BJ (cell line): ENCODE measurements at regions of chr9 and their contacts with region 1.

Region 1: DNA sequence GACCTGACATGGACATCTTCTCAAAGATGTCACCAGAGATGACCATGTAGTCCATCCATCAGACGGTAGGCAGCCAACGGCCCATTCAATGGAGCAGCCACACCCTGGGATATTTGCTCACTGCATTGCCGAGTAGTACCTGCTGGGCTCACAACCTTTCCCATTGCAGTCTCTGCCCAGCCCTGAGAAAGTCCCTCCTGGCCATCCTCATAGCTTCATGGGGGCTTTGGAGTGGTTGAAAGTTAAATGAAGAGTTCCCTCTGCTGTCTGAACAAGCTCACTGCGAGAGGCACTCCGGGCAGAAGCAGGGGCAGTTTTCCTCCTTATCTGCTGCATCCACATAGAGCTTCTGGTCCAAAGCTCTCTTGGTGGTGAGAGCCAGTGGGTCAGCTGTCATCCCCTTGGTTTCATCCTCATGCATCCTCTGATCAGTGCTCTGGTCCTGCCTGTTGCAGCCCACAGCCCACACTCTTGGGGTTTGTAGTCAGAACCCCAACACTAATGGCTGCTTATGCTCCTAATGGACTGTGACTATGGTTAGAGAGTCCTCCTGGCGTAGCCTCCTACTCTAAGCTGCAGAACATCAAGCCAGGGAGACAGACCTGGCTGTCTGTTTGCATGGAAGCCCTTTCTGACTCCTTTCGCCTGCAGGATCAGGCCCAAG is 23.4 kb downstream of the TNFSF8 start:
- DNase-seq: no peak
- H3K4me3 ChIP-seq: no peak overlapping the region
- H3K27me3 ChIP-seq: no peaks in the 10 kb centered on the region
- CTCF ChIP-seq: peak; percentile 75

Region 2: GRCh38 chr9:113785334-113785733 is 1121.7 kb before region 1 on chr9:
- CTCF ChIA-PET with region 1: no interaction called
- POLR2A ChIA-PET with region 1: no interaction called
- DNase-seq: no peak
- H3K4me3 ChIP-seq: no peak overlapping the region
- H3K27me3 ChIP-seq: peaks cover 11% of the 10 kb centered on the region
- CTCF ChIP-seq: no peak

Region 3: DNA sequence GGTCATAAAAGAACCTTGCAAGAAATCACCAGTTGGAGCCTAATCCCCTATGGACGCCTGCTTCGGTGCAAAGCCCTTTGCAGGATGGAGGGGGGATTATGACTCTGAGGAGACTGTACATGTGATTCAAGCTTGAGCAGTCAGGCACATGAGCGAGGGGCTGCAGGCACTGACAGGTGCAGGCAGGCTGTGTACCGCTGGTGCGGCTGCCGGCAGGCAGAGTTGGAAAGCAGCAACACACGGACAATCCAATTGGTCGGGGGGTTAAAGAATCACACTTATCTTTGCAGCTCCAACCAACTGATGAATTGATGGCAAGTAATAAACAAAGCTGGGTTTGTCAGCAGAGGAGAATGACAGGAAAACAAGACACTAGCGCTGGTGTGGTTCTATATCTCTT is 407.5 kb before region 1 on chr9:
- CTCF ChIA-PET with region 1: no interaction called
- POLR2A ChIA-PET with region 1: no interaction called
- DNase-seq: no peak
- H3K4me3 ChIP-seq: no peak overlapping the region
- H3K27me3 ChIP-seq: peaks cover 3% of the 10 kb centered on the region
- CTCF ChIP-seq: no peak

Region 4: GRCh38 chr9:114653556-114654159 is 253.4 kb before region 1 on chr9:
- CTCF ChIA-PET with region 1: interaction called, 11 read pairs
- POLR2A ChIA-PET with region 1: no interaction called
- DNase-seq: peak; percentile 25
- H3K4me3 ChIP-seq: no peak overlapping the region
- H3K27me3 ChIP-seq: no peaks in the 10 kb centered on the region
- CTCF ChIP-seq: peak; percentile 96

Region 5: GRCh38 chr9:114738581-114739316 is 168.3 kb before region 1 on chr9:
- CTCF ChIA-PET with region 1: interaction called, 184 read pairs
- POLR2A ChIA-PET with region 1: no interaction called
- DNase-seq: peak; percentile 34
- H3K4me3 ChIP-seq: no peak overlapping the region
- H3K27me3 ChIP-seq: no peaks in the 10 kb centered on the region; the same call in 1 of the 2 replicates
- CTCF ChIP-seq: peak; percentile 82

Region 6: DNA sequence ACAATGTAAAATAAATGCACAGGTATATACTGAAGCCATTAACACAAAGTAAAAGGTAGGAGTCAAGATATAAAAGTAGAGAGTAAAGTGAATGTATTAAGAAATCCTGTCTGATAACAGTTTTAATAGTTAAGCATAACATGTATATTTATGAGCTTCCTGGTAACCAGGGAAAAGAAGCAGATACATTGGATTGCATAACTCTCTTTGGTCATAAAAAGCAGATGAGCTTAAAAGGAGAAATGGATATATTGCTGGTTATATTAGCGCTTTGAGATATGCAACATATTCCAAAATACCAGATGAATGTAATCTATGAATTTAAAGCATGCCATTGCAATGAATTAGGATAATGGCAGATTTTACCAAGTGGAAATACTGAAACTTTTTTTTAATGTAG is 29.5 kb after region 1 on chr9:
- CTCF ChIA-PET with region 1: interaction called, 10 read pairs
- POLR2A ChIA-PET with region 1: no interaction called
- DNase-seq: peak; percentile 28
- H3K4me3 ChIP-seq: no peak overlapping the region
- H3K27me3 ChIP-seq: peaks cover 8% of the 10 kb centered on the region
- CTCF ChIP-seq: no peak

Region 7: GRCh38 chr9:115013998-115014397 is 107.0 kb after region 1 on chr9:
- CTCF ChIA-PET with region 1: interaction called, 49 read pairs
- POLR2A ChIA-PET with region 1: no interaction called
- DNase-seq: no peak
- H3K4me3 ChIP-seq: no peak overlapping the region
- H3K27me3 ChIP-seq: peaks cover 2% of the 10 kb centered on the region; the same call in 1 of the 2 replicates
- CTCF ChIP-seq: peak; percentile 75